ENCODE measurements at regions of chr18 and their contacts with region 1.

Region 1: GRCh38 chr18:22609642-22610041 is 191.9 kb upstream of the CTAGE1 start:
- DNase-seq: peak; percentile 82
- H3K4me3 ChIP-seq: no peak overlapping the region
- H3K27ac ChIP-seq: peak overlapping the region; percentile 87
- H3K4me1 ChIP-seq: peaks cover 31% of the 10 kb centered on the region
- H3K27me3 ChIP-seq: peaks cover 0 to 10% of the 10 kb centered on the region in 2 experiments
- CTCF ChIP-seq: no peak
- POLR2A ChIP-seq: no peak

Region 2: GRCh38 chr18:22667616-22668422 is 58.2 kb after region 1 on chr18:
- CTCF ChIA-PET with region 1: interaction called, 3 read pairs
- POLR2A ChIA-PET with region 1: no interaction called
- dilution Hi-C with region 1: no loop called
- intact Hi-C with region 1: loop called (anchors 2 kb)
- DNase-seq: peak; percentile 96
- H3K4me3 ChIP-seq: no peak overlapping the region
- H3K27ac ChIP-seq: peak overlapping the region; percentile 79
- H3K4me1 ChIP-seq: peaks cover 37% of the 10 kb centered on the region
- H3K27me3 ChIP-seq: no peaks in the 10 kb centered on the region
- CTCF ChIP-seq: no peak
- POLR2A ChIP-seq: peak; percentile 49